Right cardiac atrium (tissue), 5 donors: ENCODE measurements at regions of chr5 and their contacts with region 1.

Region 1: DNA sequence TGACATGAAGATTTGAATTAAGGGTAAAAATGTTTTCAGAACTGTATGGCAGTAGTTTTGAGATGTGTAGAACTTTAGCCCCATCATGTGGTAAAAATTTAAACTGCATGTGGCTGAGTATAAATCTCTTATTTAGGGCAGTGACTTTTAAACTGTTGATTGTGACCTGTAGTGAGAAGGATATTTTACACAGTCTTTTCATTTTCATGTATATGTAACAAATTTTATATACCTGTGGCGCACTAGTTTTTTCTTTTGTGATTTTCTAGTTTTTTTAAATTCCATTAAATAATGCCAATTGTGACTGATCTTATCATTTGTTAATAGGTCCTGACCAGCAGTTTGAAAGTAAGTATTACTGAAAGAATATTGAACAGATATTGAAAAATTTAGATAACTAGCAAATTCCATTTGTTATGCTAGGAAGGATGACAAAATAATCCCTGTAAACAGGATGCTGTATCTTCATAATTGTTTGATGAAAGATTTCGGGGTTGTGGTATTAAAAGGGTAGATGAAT is 47.2 kb downstream of the GPBP1 start:
- DNase-seq: no peak
- ATAC-seq: peak; percentile 53 to 65
- H3K4me3 ChIP-seq: no peak overlapping the region
- H3K27ac ChIP-seq: no peak overlapping the region
- H3K4me1 ChIP-seq: no peaks in the 10 kb centered on the region
- H3K27me3 ChIP-seq: no peaks in the 10 kb centered on the region

Region 2: DNA sequence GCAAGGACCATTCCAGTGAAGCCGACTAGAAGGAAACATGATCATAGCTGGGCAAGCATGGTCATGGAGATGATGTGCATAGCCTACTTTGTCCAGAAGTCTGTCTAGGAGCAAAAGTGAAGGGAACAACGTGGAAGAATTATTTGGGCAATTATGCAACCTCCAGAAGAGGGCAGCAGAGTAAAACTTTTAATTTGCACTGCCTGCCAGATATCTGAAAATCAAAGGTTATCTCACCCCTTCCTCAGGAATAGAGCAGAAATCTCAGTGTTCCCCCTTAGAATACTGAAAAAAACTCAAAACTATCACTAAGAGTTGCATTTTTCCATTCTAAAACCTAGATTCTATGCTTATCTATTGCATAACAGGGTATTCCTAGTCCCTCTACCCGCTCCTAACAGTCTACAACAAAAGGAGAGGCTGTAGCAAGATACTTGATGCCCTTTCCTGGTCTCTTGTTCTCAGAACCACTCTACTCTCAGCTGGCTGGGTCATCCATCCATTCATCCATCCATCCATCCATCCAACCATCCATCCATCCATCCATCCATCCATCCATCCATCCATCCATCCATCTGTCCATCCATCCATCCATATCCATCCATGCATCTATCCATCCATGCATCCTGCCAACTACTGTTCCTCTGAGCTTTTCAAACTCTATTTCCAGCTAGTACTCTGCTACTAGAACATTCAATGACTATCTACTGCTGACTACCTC is 320.1 kb before region 1 on chr5:
- intact Hi-C with region 1: loop called (anchors 2 to 10 kb)
- DNase-seq: no peak
- ATAC-seq: peak in 1 of 2 donors; percentile 47
- H3K4me3 ChIP-seq: no peak overlapping the region
- H3K27ac ChIP-seq: no peak overlapping the region
- H3K4me1 ChIP-seq: no peaks in the 10 kb centered on the region
- H3K27me3 ChIP-seq: no peaks in the 10 kb centered on the region

Region 3: DNA sequence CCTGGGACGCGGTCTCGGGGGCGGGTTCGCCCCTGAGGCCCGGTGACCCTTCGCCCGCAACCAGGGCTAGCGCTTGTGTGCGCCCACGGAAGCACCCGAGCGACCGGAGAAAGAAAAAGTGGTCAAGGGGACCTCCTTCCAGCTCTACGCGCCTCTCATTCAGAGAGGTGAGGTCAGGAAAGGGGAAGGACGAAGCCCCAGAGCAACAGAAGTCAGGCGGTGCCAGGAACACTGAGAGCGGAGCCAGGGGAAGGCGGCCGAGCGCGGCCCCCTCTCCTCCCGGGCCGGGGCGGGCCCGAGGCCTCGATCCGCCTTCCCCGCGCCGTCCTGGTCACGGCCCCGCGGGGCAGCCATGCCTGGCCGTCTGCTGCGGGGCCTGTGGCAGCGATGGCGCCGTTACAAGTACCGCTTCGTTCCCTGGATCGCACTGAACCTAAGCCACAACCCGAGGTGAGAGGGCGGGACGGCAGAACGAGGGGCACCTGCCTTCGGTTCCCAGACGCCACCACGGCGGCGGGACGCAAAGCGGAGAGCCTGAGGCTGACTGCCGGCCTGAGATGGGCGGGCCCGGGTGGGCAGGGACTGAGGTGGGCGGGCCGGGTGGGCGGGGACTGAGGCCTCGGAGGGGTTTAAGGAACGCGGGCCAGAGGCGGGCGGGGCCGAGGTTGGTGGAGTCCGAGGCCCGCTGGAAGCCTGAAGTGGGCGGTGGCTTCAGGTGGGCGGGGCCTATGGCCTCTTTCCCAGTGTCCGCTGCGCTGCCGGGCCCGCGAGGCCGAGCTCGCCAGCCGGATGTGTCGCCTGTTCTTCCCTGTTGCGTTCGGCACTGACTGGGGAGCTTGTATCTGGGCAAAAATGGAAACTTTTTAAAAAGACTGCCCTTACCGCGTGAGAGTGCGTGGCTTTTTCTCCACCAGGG is 311.6 kb before region 1 on chr5 and contains the start of gene SETD9:
- intact Hi-C with region 1: loop called in 3 of 4 experiments (anchors 5 to 10 kb)
- DNase-seq: peak; percentile 99 to 100 (median 100)
- ATAC-seq: peak; percentile 97
- H3K4me3 ChIP-seq: peak within 1 kb of the TSS; percentile 72
- H3K27ac ChIP-seq: peak within 1 kb of the TSS; percentile 95
- H3K4me1 ChIP-seq: peaks cover 2% of the 10 kb centered on the region
- H3K27me3 ChIP-seq: no peaks in the 10 kb centered on the region
- total RNA-seq, gene SETD9: 11.6 to 17.0 (median 14.3) TPM

Region 4: GRCh38 chr5:57173185-57174127 is 47.7 kb before region 1 on chr5 and contains the start of gene GPBP1:
- intact Hi-C with region 1: loop called in 1 of 4 experiments (anchors 5 kb)
- DNase-seq: peak; percentile 99
- ATAC-seq: peak; percentile 95 to 96
- H3K4me3 ChIP-seq: peak within 1 kb of the TSS; percentile 59
- H3K27ac ChIP-seq: peak within 1 kb of the TSS; percentile 81
- H3K4me1 ChIP-seq: peaks cover 3% of the 10 kb centered on the region
- H3K27me3 ChIP-seq: no peaks in the 10 kb centered on the region
- total RNA-seq, gene GPBP1: 54.3 to 70.8 (median 58.8) TPM

Region 5: GRCh38 chr5:57184322-57184721 is 36.8 kb before region 1 on chr5:
- intact Hi-C with region 1: loop called in 1 of 4 experiments (anchors 5 kb)
- DNase-seq: no peak
- ATAC-seq: no peak
- H3K4me3 ChIP-seq: no peak overlapping the region
- H3K27ac ChIP-seq: no peak overlapping the region
- H3K4me1 ChIP-seq: peaks cover 17% of the 10 kb centered on the region
- H3K27me3 ChIP-seq: no peaks in the 10 kb centered on the region